ENCODE measurements at regions of chr1 and their contacts with region 1.

Region 1: DNA sequence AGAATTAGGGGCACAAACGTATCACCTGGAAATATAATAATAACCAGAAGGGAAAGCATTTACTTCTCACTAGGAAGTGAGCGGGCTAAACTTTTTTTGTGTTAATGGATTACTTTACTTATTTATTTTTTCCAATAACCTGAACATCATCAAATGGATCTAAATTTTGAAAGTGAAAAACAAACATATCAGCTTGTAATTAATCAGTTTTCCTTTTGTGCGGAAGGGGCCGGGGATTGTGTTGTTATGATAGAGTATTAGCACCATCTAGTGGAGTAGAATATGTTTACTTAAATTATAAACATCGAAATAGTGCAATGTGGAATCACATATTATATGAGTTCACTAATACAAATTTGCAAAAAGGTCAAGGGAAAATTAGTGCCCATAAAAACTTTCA is 9.0 kb downstream of the CFH start:
- DNase-seq: no peak
- ATAC-seq: peak; percentile 48 to 94 (median 85)
- H3K4me3 ChIP-seq: no peak overlapping the region
- H3K27ac ChIP-seq: no peak overlapping the region
- H3K4me1 ChIP-seq: no peaks in the 10 kb centered on the region
- H3K27me3 ChIP-seq: peaks cover 0 to 10% (median 0%) of the 10 kb centered on the region in 4 donors
- CTCF ChIP-seq: peak in 2 of 4 donors; percentile 30 to 46

Region 2: GRCh38 chr1:196148367-196148970 is 512.4 kb before region 1 on chr1:
- intact Hi-C with region 1: loop called in 2 of 3 experiments (anchors 5 to 10 kb)
- DNase-seq: no peak
- ATAC-seq: peak in 2 of 4 donors; percentile 48 to 56
- H3K4me3 ChIP-seq: no peak overlapping the region
- H3K27ac ChIP-seq: no peak overlapping the region
- H3K4me1 ChIP-seq: peaks cover 0 to 5% (median 5%) of the 10 kb centered on the region in 3 donors
- H3K27me3 ChIP-seq: no peaks in the 10 kb centered on the region
- CTCF ChIP-seq: peak; percentile 26 to 49 (median 42)

Region 3: DNA sequence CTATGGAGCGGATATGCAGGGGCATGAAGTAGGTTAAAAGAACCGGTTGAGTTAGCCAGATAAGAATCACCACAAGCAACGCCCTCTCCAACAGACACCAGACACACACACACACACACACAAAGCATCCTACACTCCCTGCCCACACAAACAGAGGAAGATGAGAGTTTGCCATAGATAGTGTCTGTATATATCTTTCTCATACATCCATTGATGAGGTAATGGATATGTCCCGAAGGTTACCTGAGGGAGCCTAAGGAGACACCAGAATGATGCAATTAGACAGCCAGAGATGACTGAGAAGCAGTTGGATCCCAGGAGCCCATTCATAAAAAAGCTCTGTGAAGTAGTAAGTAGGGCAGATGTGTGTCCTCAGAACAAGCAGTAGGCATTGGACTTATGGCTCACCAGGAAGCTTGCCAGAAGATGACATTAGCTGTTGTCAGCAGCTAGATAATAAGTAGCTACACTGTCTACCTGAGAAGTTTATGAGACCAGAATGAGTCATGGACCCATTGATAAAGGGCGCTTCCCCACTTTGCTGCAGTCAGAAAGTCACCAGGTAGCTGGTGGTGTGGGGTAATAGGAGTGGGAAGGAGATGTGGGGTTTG is 299.6 kb before region 1 on chr1:
- intact Hi-C with region 1: loop called in 1 of 3 experiments (anchors 10 kb)
- DNase-seq: no peak
- ATAC-seq: no peak
- H3K4me3 ChIP-seq: no peak overlapping the region
- H3K27ac ChIP-seq: no peak overlapping the region
- H3K4me1 ChIP-seq: no peaks in the 10 kb centered on the region
- H3K27me3 ChIP-seq: no peaks in the 10 kb centered on the region
- CTCF ChIP-seq: no peak

Measured in pancreas (tissue), 10 donors.